B cell (primary cell): ENCODE measurements at regions of chr2 and their contacts with region 1.

Region 1: GRCh38 chr2:191165176-191165643 is 14.4 kb upstream of the STAT4 start:
- DNase-seq: peak; percentile 53
- ATAC-seq: peak; percentile 60
- H3K4me3 ChIP-seq: no peak overlapping the region
- H3K4me3 Mint-ChIP-seq: no peak overlapping the region
- H3K27ac ChIP-seq: no peak overlapping the region
- H3K27ac Mint-ChIP-seq: no peak overlapping the region
- H3K4me1 ChIP-seq: no peaks in the 10 kb centered on the region
- H3K4me1 Mint-ChIP-seq: peaks cover 3% of the 10 kb centered on the region
- H3K27me3 ChIP-seq: peaks cover 0 to 5% (median 0%) of the 10 kb centered on the region in 4 experiments
- H3K27me3 Mint-ChIP-seq: peaks cover 9% of the 10 kb centered on the region
- CTCF ChIP-seq: peak; percentile 79

Region 2: GRCh38 chr2:191150600-191151330 is 14.4 kb before region 1 on chr2 and contains the start of gene STAT4:
- CTCF ChIA-PET with region 1: interaction called, 19 read pairs
- POLR2A ChIA-PET with region 1: no interaction called
- intact Hi-C with region 1: loop called (anchors 1 kb)
- DNase-seq: peak; percentile 88
- ATAC-seq: peak; percentile 91
- H3K4me3 ChIP-seq: peak within 1 kb of the TSS; percentile 52 to 97 (median 72)
- H3K4me3 Mint-ChIP-seq: peak within 1 kb of the TSS; percentile 94
- H3K27ac ChIP-seq: peak within 1 kb of the TSS; percentile 38 to 53
- H3K27ac Mint-ChIP-seq: peak within 1 kb of the TSS; percentile 85
- H3K4me1 ChIP-seq: peaks cover 3 to 16% of the 10 kb centered on the region in 2 donors
- H3K4me1 Mint-ChIP-seq: peaks cover 30% of the 10 kb centered on the region
- H3K27me3 ChIP-seq: no peaks in the 10 kb centered on the region
- H3K27me3 Mint-ChIP-seq: peaks cover 13% of the 10 kb centered on the region
- CTCF ChIP-seq: no peak
- total RNA-seq, gene STAT4: 58.9 and 62.1 TPM in 2 replicates

Region 3: DNA sequence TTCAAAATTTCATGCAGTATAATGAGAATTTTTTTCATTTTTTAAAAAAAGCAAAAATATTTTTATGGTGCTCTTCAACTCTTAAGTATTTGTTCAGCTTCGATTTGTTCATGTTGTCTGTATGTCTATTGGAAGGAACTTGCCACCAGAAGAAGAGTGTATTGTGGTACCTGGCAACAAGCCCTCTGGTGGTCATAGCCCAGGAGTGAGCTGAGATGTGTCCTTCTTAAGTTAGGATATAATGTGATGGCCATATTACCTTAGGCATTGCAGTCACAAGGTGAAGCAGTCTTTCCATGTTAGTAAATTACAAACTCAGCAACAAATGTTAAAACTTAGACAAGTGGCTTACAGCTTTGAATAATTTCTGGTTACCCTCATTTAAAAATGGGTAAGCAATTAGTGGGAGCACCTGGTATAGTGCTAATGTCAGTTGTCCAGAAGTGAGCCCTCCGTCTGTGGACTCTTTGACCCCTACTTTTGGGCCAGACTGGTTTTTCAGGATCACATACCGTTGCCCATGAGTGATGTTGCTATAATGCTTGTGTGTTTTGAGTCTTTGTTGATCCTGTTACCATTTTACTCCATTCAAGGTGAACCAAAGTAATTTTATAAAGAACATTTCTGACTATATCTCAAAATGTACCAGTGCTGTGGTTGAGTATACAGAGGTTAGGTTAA is 137.4 kb after region 1 on chr2:
- CTCF ChIA-PET with region 1: interaction called, 4 read pairs
- POLR2A ChIA-PET with region 1: no interaction called
- intact Hi-C with region 1: loop called (anchors 1 kb)
- DNase-seq: peak; percentile 57
- ATAC-seq: peak; percentile 53
- H3K4me3 ChIP-seq: no peak overlapping the region
- H3K4me3 Mint-ChIP-seq: no peak overlapping the region
- H3K27ac ChIP-seq: no peak overlapping the region
- H3K27ac Mint-ChIP-seq: no peak overlapping the region
- H3K4me1 ChIP-seq: peaks cover 4 to 8% of the 10 kb centered on the region in 2 donors
- H3K4me1 Mint-ChIP-seq: peaks cover 10% of the 10 kb centered on the region
- H3K27me3 ChIP-seq: no peaks in the 10 kb centered on the region
- H3K27me3 Mint-ChIP-seq: peaks cover 7% of the 10 kb centered on the region
- CTCF ChIP-seq: peak; percentile 47

Region 4: GRCh38 chr2:191515551-191515950 is 350.3 kb after region 1 on chr2:
- CTCF ChIA-PET with region 1: interaction called, 25 read pairs
- POLR2A ChIA-PET with region 1: no interaction called
- intact Hi-C with region 1: no loop called
- DNase-seq: no peak
- ATAC-seq: no peak
- H3K4me3 ChIP-seq: no peak overlapping the region
- H3K4me3 Mint-ChIP-seq: no peak overlapping the region
- H3K27ac ChIP-seq: no peak overlapping the region
- H3K27ac Mint-ChIP-seq: no peak overlapping the region
- H3K4me1 ChIP-seq: no peaks in the 10 kb centered on the region
- H3K4me1 Mint-ChIP-seq: no peaks in the 10 kb centered on the region
- H3K27me3 ChIP-seq: peaks cover 0 to 4% (median 0%) of the 10 kb centered on the region in 4 experiments
- H3K27me3 Mint-ChIP-seq: peaks cover 4% of the 10 kb centered on the region
- CTCF ChIP-seq: no peak

Region 5: GRCh38 chr2:191521608-191522208 is 356.5 kb after region 1 on chr2:
- CTCF ChIA-PET with region 1: interaction called, 119 read pairs
- POLR2A ChIA-PET with region 1: no interaction called
- intact Hi-C with region 1: no loop called
- DNase-seq: peak; percentile 37
- ATAC-seq: peak; percentile 33
- H3K4me3 ChIP-seq: no peak overlapping the region
- H3K4me3 Mint-ChIP-seq: no peak overlapping the region
- H3K27ac ChIP-seq: no peak overlapping the region
- H3K27ac Mint-ChIP-seq: no peak overlapping the region
- H3K4me1 ChIP-seq: no peaks in the 10 kb centered on the region
- H3K4me1 Mint-ChIP-seq: no peaks in the 10 kb centered on the region
- H3K27me3 ChIP-seq: peaks cover 0 to 4% (median 0%) of the 10 kb centered on the region in 4 experiments
- H3K27me3 Mint-ChIP-seq: peaks cover 4% of the 10 kb centered on the region
- CTCF ChIP-seq: peak; percentile 92